GM12878 (cell line): ENCODE measurements at regions of chr4 and their contacts with region 1.

Region 1: GRCh38 chr4:145956288-145956890 is 17.8 kb upstream of the ZNF827 start:
- DNase-seq: no peak
- ATAC-seq: peak; percentile 86
- H3K4me3 ChIP-seq: no peak overlapping the region
- H3K27ac ChIP-seq: no peak overlapping the region
- H3K4me1 ChIP-seq: no peaks in the 10 kb centered on the region
- H3K27me3 ChIP-seq: no peaks in the 10 kb centered on the region
- CTCF ChIP-seq: peak; percentile 67 to 78 (median 78)
- EP300 ChIP-seq: no peak
- POLR2A ChIP-seq: no peak
- RAD21 ChIP-seq: peak; percentile 75

Region 2: DNA sequence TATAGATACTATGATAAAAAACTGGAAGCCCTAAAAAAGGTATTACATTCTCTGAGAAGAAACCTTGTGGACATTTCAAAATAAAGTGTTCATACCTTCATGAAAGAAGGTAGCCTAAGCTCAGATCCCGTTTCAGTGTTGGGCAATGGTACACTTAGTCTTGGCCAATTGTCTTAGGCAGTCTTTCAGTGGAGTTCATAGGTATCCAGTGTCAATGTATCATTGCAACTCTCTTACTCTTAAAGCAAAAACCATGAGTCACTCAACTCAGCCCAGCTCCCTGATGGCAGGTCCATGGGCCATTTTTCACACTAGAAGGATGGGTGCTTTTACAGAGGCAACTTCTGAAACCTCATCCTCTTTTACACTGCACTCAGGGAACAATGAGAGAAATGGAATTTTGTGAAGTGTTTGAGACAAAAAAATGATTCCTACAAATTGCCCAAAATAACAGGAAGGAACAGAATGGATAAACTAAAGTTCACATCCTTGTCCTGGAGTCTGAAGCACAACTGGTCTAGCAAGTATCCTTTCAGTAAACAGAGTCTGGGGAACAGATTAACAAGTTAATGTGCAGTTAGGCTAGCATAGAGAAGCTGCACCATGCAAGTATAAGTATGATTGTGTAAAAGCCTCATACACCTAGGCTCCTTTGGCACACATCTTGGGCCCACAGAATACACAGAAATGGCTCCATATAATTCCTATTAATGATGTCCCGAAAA is 10.8 kb before region 1 on chr4:
- CTCF ChIA-PET with region 1: interaction called, 13 read pairs
- POLR2A ChIA-PET with region 1: no interaction called
- RAD21 ChIA-PET with region 1: no interaction called
- SMC1A ChIA-PET with region 1: interaction called, 8 read pairs
- in situ Hi-C with region 1: no loop called
- intact Hi-C with region 1: no loop called
- DNase-seq: no peak
- ATAC-seq: no peak
- H3K4me3 ChIP-seq: no peak overlapping the region
- H3K27ac ChIP-seq: no peak overlapping the region
- H3K4me1 ChIP-seq: no peaks in the 10 kb centered on the region
- H3K27me3 ChIP-seq: peaks cover 0 to 2% of the 10 kb centered on the region in 2 experiments; a peak in 2 of 4 replicates
- CTCF ChIP-seq: no peak
- EP300 ChIP-seq: no peak
- POLR2A ChIP-seq: no peak
- RAD21 ChIP-seq: no peak

Region 3: DNA sequence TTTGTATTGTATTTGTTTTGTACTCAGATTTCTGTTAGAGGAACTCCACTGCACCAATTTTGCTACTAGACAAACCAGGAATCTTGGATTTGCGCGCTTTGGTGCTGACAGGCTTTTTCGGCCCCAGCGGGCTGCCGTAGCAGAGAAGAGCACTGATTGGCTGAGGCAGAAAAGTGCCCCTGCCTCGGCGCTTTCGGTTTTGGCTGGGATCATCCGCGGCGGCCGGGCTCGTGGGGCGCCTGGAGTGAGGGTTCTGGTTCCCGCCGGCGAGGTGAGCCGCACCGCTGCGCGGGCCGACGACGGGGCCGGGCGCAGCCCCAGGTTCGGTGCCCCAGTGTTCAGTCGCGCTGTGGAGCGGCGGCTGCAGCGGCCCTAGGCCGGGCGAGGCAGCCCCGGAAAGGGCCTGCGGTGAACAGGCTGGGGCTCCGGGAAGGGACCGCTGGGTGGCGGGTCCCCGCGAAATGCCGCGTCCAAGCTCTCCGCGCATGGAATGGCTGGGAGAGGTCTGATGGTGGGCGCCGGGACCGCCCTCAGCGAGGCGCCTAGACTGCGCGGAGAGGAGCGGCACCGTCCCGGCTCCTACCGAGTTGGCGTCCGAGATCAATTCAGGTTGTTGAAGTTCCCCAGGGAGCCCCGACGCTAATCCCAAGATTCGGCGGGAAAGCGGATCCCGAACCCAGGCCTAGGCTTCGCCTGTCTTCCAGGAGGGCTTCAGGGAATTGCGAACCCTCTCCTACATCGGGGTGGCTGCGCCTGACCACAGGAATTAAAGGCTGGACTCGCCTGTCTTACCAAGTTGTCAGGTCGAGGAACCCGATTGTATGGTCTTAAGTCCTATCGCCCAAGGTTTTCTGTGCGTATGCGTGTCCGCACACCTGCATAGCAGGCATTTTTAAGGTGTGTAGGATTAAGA is 219.4 kb after region 1 on chr4 and contains the start of gene LSM6:
- CTCF ChIA-PET with region 1: no interaction called
- POLR2A ChIA-PET with region 1: no interaction called
- RAD21 ChIA-PET with region 1: no interaction called
- SMC1A ChIA-PET with region 1: no interaction called
- in situ Hi-C with region 1: no loop called
- intact Hi-C with region 1: loop called (anchors 5 kb)
- DNase-seq: peak; percentile 36
- ATAC-seq: peak; percentile 89
- H3K4me3 ChIP-seq: peak within 1 kb of the TSS; percentile 84
- H3K27ac ChIP-seq: peak within 1 kb of the TSS; percentile 92
- H3K4me1 ChIP-seq: peaks cover 13% of the 10 kb centered on the region
- H3K27me3 ChIP-seq: no peaks in the 10 kb centered on the region
- CTCF ChIP-seq: no peak
- EP300 ChIP-seq: no peak
- POLR2A ChIP-seq: peak; percentile 87
- RAD21 ChIP-seq: no peak
- polyA plus RNA-seq, gene LSM6: 261 to 262 TPM